IMR-90 (cell line): ENCODE measurements at regions of chr2 and their contacts with region 1.

Region 1: DNA sequence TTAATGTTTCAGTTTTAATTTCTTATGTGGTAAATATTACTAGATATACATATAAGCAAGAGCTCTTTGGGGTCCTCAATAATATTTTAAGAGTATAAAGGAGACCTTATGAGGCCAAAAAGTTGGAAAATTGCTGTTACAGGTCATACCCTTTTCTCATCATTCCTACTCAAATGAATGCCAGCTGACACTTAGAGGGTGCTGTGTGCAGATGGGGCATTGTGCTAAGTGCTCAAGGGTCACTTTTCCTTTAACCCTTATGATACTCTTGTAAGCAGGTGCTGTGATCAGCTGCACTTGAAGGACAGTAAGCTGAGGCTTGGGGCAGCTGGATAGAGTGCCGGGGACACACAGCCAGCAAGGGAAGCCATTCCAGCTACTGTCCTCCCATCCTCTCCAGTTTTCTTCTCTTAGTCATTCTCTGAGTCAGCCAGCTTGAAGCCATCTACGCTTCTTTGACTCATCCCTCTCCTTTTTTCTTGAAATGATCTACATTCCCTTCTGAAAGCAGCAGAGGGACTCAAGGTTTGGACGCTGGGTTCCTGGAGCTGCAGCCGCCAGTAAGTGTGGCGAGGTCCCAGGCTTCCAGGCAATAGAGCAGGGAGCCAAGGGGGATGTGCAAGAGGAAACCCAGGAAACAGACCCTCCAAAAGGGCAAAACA is 42.0 kb upstream of the CREB1 start:
- DNase-seq: peak; percentile 95
- ATAC-seq: peak; percentile 93
- H3K4me3 ChIP-seq: no peak overlapping the region
- H3K27ac ChIP-seq: peak overlapping the region; percentile 33; the same call in 1 of the 2 replicates
- H3K4me1 ChIP-seq: peaks cover 10% of the 10 kb centered on the region
- H3K27me3 ChIP-seq: no peaks in the 10 kb centered on the region
- CTCF ChIP-seq: peak; percentile 66
- POLR2A ChIP-seq: 0 out of 2 replicates have a peak, but pooled peaks have one; percentile 26
- RAD21 ChIP-seq: peak; percentile 76

Region 2: GRCh38 chr2:207143215-207144172 is 344.3 kb before region 1 on chr2:
- CTCF ChIA-PET with region 1: no interaction called
- POLR2A ChIA-PET with region 1: no interaction called
- dilution Hi-C with region 1: no loop called
- in situ Hi-C with region 1: no loop called
- intact Hi-C with region 1: no loop called
- DNase-seq: no peak
- ATAC-seq: peak; percentile 46
- H3K4me3 ChIP-seq: no peak overlapping the region
- H3K27ac ChIP-seq: peak overlapping the region; percentile 30
- H3K4me1 ChIP-seq: peaks cover 16% of the 10 kb centered on the region
- H3K27me3 ChIP-seq: no peaks in the 10 kb centered on the region
- CTCF ChIP-seq: no peak
- POLR2A ChIP-seq: no peak
- RAD21 ChIP-seq: no peak

Region 3: GRCh38 chr2:207223051-207223450 is 264.7 kb before region 1 on chr2:
- CTCF ChIA-PET with region 1: no interaction called
- POLR2A ChIA-PET with region 1: interaction called, 16 read pairs
- dilution Hi-C with region 1: no loop called
- in situ Hi-C with region 1: no loop called
- intact Hi-C with region 1: no loop called
- DNase-seq: peak; percentile 87
- ATAC-seq: peak; percentile 84
- H3K4me3 ChIP-seq: no peak overlapping the region
- H3K27ac ChIP-seq: no peak overlapping the region
- H3K4me1 ChIP-seq: peaks cover 13% of the 10 kb centered on the region
- H3K27me3 ChIP-seq: no peaks in the 10 kb centered on the region
- CTCF ChIP-seq: no peak
- POLR2A ChIP-seq: no peak
- RAD21 ChIP-seq: peak; percentile 19; the same call in 1 of the 2 replicates

Region 4: GRCh38 chr2:207330912-207331311 is 156.9 kb before region 1 on chr2:
- CTCF ChIA-PET with region 1: no interaction called
- POLR2A ChIA-PET with region 1: no interaction called
- dilution Hi-C with region 1: no loop called
- in situ Hi-C with region 1: no loop called
- intact Hi-C with region 1: no loop called
- DNase-seq: peak; percentile 97
- ATAC-seq: peak; percentile 7; the same call in 1 of the 2 replicates
- H3K4me3 ChIP-seq: no peak overlapping the region
- H3K27ac ChIP-seq: peak overlapping the region; percentile 59
- H3K4me1 ChIP-seq: peaks cover 14% of the 10 kb centered on the region
- H3K27me3 ChIP-seq: no peaks in the 10 kb centered on the region
- CTCF ChIP-seq: no peak
- POLR2A ChIP-seq: no peak
- RAD21 ChIP-seq: peak; percentile 14; the same call in 1 of the 2 replicates

Region 5: GRCh38 chr2:207584952-207585351 is 97.2 kb after region 1 on chr2:
- CTCF ChIA-PET with region 1: no interaction called
- POLR2A ChIA-PET with region 1: no interaction called
- dilution Hi-C with region 1: no loop called
- in situ Hi-C with region 1: no loop called
- intact Hi-C with region 1: no loop called
- DNase-seq: no peak
- ATAC-seq: no peak
- H3K4me3 ChIP-seq: no peak overlapping the region
- H3K27ac ChIP-seq: no peak overlapping the region
- H3K4me1 ChIP-seq: no peaks in the 10 kb centered on the region
- H3K27me3 ChIP-seq: no peaks in the 10 kb centered on the region
- CTCF ChIP-seq: no peak
- POLR2A ChIP-seq: no peak
- RAD21 ChIP-seq: no peak

Region 6: GRCh38 chr2:207619764-207620203 is 132.0 kb after region 1 on chr2:
- CTCF ChIA-PET with region 1: no interaction called
- POLR2A ChIA-PET with region 1: no interaction called
- dilution Hi-C with region 1: no loop called
- in situ Hi-C with region 1: no loop called
- intact Hi-C with region 1: loop called (anchors 1 kb)
- DNase-seq: no peak
- ATAC-seq: no peak
- H3K4me3 ChIP-seq: no peak overlapping the region
- H3K27ac ChIP-seq: no peak overlapping the region
- H3K4me1 ChIP-seq: peaks cover 12% of the 10 kb centered on the region
- H3K27me3 ChIP-seq: no peaks in the 10 kb centered on the region
- CTCF ChIP-seq: no peak
- POLR2A ChIP-seq: no peak
- RAD21 ChIP-seq: no peak

Region 7: DNA sequence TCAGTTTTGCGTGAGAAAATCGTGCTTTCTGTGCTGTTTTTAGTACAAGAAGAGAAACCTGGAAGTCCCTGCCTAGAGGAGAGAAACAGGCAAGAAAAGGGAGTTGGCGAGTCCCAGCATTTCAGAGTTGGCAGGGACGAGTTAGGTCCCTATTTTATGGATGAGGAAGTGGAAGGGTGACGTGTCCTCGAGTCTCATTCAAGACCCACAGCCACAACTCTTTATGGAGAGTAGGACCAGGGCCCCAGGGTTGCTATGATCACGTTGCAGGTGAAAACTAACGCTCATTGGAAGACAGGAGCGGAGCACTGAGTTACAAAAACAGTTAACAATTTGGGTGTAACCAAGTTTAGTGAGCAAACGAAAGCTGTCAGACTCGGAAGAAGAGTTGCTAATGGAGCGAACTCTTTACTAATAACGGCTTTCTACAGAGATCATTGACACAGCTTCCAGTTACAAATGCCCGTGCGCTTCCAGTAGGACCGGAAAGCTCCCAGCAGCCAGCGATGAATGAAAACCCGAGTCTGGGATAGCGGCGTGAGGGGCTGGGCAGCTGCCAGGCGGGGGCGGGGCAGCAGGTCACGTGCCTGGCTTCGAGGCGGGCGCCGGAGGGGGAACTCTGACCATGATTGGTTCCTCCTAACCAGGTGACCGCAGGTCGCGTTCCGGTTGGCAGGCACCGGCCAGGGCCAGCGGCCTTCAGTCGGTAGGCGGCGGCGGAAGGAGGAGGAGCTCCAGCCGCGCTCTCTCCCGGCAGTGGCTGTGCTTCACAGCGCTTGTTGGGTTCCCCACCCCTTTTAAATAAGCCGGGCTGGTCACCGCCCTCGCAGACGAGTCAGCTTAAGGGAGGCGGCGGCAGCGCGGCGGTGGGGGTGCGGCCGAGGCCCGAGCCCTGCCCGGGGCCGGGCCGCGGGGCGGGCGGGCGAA is 223.3 kb after region 1 on chr2 and contains the start of gene CCNYL1:
- CTCF ChIA-PET with region 1: interaction called, 4 read pairs
- POLR2A ChIA-PET with region 1: no interaction called
- dilution Hi-C with region 1: no loop called
- in situ Hi-C with region 1: no loop called
- intact Hi-C with region 1: loop called (anchors 5 kb)
- DNase-seq: peak; percentile 99
- ATAC-seq: peak; percentile 98
- H3K4me3 ChIP-seq: peak within 1 kb of the TSS; percentile 87
- H3K27ac ChIP-seq: peak within 1 kb of the TSS; percentile 75
- H3K4me1 ChIP-seq: no peaks in the 10 kb centered on the region
- H3K27me3 ChIP-seq: no peaks in the 10 kb centered on the region
- CTCF ChIP-seq: 0 out of 2 replicates have a peak, but pooled peaks have one; percentile 10
- POLR2A ChIP-seq: peak; percentile 90
- RAD21 ChIP-seq: no peak
- total RNA-seq, gene CCNYL1: 5.4 and 6.7 TPM in 2 replicates

Region 8: DNA sequence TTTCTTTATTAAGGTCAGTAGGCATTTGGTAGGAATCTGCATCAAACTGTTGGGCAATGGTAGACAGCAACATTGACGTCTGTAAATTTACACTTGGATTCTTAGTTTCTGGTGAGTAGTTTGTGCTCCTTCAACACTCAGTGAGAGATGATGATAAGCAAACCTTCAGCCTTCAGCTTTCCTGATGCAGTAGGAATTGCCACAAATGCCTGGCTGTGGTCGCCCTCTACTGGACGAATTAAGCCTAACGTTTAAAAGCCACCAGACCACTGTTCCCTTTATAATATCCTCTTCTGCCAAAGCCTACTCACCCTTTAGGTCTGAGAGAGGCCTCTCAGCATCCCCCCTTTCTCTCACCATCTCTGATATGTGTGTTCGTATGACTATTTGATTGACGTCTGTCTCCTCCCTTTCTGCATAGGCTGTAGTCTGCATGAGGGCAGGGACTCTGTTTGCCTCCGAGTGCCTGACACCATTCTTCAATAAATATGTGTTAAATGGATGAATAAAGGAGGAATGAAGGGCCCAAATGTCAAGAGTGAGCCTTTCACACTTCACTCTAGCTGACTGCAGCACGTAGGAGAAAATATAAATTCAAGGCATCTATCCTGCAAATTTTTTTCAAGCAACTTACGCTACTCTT is 584.6 kb after region 1 on chr2:
- CTCF ChIA-PET with region 1: no interaction called
- POLR2A ChIA-PET with region 1: no interaction called
- dilution Hi-C with region 1: no loop called
- in situ Hi-C with region 1: loop called (anchors 25 kb)
- intact Hi-C with region 1: loop called (anchors 10 kb)
- DNase-seq: peak; percentile 72
- ATAC-seq: peak; percentile 93
- H3K4me3 ChIP-seq: no peak overlapping the region
- H3K27ac ChIP-seq: no peak overlapping the region
- H3K4me1 ChIP-seq: no peaks in the 10 kb centered on the region
- H3K27me3 ChIP-seq: peaks cover 5% of the 10 kb centered on the region
- CTCF ChIP-seq: peak; percentile 85
- POLR2A ChIP-seq: 0 out of 2 replicates have a peak, but pooled peaks have one; percentile 42
- RAD21 ChIP-seq: peak; percentile 98